Right ventricle myocardium inferior (tissue), 1 donor: ENCODE measurements at regions of chr6 and their contacts with region 1.

Region 1: GRCh38 chr6:35663447-35664235 is 25.1 kb downstream of the FKBP5 start:
- DNase-seq: no peak
- ATAC-seq: peak; percentile 33

Region 2: GRCh38 chr6:35647400-35647799 is 16.2 kb before region 1 on chr6:
- intact Hi-C with region 1: loop called (anchors 2 kb)
- DNase-seq: no peak
- ATAC-seq: no peak